HEK293 (cell line): ENCODE measurements at regions of chr18 and their contacts with region 1.

Region 1: DNA sequence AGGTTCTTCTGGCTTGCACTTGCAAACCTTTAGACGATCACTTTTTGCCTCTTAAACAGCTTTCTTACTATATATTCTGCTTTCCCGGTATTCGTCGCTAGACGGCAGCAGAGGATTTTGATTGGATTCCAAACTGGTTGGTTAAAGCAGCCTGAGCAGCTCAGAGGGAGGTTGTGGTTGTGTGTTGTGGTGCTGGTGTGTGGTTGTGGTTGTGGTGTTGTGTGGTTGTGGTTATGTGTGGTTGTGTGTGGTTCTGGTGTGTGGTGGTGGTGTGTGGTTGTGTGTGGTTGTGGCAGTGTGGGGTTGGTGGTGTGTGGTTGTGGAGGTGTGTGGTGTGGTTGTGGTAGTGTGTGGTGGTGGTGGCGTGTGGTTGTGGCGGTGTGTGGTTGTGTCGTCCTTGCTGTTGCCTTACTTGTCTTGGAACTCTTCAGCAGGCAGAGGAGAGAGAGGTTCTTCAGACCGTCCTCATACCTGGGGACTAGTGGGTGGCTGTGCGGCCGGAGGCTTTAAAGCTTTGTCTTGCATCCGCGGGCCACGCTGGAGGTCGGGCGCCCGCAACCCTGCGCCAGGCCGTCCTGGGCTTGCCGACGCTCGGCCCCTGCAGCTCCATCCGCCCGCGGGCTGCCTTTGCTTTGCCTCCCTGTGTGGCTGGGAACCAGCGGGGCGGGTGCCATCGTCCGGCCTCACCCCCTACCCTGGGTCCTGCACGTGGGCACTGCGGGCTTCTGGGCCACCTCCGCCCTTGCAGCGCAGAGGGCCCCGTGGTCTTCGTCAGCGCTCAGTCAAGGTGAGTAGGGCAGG is 190.8 kb downstream of the ARHGAP28 start:
- H3K4me3 ChIP-seq: no peak overlapping the region
- H3K27ac ChIP-seq: no peak overlapping the region
- H3K4me1 ChIP-seq: no peaks in the 10 kb centered on the region
- CTCF ChIP-seq: peak; percentile 84

Region 2: GRCh38 chr18:6850396-6850795 is 69.9 kb before region 1 on chr18:
- CTCF ChIA-PET with region 1: no interaction called
- POLR2A ChIA-PET with region 1: no interaction called
- H3K4me3 ChIP-seq: no peak overlapping the region
- H3K27ac ChIP-seq: no peak overlapping the region
- H3K4me1 ChIP-seq: no peaks in the 10 kb centered on the region; the same call in 1 of the 2 replicates
- CTCF ChIP-seq: no peak

Region 3: GRCh38 chr18:6941996-6942395 is 21.7 kb after region 1 on chr18:
- CTCF ChIA-PET with region 1: interaction called, 14 read pairs
- POLR2A ChIA-PET with region 1: interaction called, 3 read pairs
- H3K4me3 ChIP-seq: no peak overlapping the region
- H3K27ac ChIP-seq: no peak overlapping the region
- H3K4me1 ChIP-seq: no peaks in the 10 kb centered on the region
- CTCF ChIP-seq: no peak

Region 4: GRCh38 chr18:7017013-7017412 is 96.7 kb after region 1 on chr18:
- CTCF ChIA-PET with region 1: interaction called, 150 read pairs
- POLR2A ChIA-PET with region 1: interaction called, 3 read pairs
- H3K4me3 ChIP-seq: no peak overlapping the region
- H3K27ac ChIP-seq: no peak overlapping the region
- H3K4me1 ChIP-seq: no peaks in the 10 kb centered on the region
- CTCF ChIP-seq: no peak

Region 5: DNA sequence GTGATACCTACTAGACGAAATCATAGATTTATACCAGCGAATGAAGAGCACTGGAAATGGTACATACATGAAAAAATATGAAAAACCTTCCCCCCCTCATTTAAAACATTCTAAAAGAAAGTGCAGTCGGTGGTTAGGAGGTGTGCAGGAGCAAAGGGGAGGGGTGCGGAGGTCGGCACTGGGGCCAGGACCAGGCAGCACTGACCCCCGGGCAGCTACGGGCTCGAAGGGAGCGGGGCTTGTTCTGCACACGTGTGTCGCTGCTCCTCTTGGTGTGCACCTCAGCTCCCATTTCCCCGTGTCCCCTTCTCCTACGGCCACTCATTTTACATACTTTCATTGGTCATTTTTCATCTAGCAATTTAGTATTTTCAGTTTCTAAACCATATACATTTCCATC is 108.3 kb after region 1 on chr18:
- CTCF ChIA-PET with region 1: interaction called, 150 read pairs
- POLR2A ChIA-PET with region 1: no interaction called
- H3K4me3 ChIP-seq: no peak overlapping the region
- H3K27ac ChIP-seq: no peak overlapping the region
- H3K4me1 ChIP-seq: no peaks in the 10 kb centered on the region
- CTCF ChIP-seq: no peak

Region 6: GRCh38 chr18:7177116-7177744 is 256.9 kb after region 1 on chr18:
- CTCF ChIA-PET with region 1: interaction called, 76 read pairs
- POLR2A ChIA-PET with region 1: no interaction called
- H3K4me3 ChIP-seq: no peak overlapping the region
- H3K27ac ChIP-seq: no peak overlapping the region
- H3K4me1 ChIP-seq: no peaks in the 10 kb centered on the region
- CTCF ChIP-seq: peak; percentile 44; the same call in 1 of the 2 replicates

Region 7: DNA sequence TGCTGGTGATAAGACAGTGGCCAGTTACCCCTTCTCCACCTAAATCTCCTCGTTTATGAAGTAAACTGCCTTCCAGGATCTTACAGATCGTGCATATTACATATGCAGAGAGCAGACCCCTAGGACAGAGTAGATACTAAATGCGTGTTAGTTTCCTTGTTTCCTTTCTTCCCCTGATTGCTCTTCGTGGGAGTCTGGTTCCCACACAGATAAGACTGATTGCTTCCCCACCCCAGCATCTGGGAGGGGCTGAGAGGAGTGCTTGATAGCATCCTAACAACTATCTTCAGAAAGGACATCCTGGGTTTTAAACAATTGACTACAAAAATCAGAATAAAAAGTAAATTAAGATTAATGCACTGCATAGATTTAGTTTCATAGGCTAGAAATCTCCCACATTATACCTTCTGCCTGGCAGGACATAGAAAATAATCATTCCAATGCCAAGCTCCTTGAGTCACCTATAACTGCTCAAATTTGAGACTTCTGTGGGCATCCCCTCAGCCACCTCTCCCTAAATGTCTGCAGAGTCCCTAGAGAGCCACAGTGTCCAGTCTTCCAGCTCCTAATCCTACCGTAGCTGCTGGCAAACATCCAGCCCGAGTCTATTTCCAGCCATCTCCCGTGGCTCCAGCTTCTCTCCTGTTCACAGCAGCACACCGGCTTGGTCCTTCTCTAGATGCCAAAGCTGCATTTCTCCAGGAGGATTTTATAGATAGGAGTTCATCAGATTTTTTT is 438.9 kb after region 1 on chr18:
- CTCF ChIA-PET with region 1: no interaction called
- POLR2A ChIA-PET with region 1: no interaction called
- H3K4me3 ChIP-seq: no peak overlapping the region
- H3K27ac ChIP-seq: no peak overlapping the region
- H3K4me1 ChIP-seq: peaks cover 3% of the 10 kb centered on the region; the same call in 1 of the 2 replicates
- CTCF ChIP-seq: no peak